SK-N-SH (cell line): ENCODE measurements at regions of chr19 and their contacts with region 1.

Region 1: DNA sequence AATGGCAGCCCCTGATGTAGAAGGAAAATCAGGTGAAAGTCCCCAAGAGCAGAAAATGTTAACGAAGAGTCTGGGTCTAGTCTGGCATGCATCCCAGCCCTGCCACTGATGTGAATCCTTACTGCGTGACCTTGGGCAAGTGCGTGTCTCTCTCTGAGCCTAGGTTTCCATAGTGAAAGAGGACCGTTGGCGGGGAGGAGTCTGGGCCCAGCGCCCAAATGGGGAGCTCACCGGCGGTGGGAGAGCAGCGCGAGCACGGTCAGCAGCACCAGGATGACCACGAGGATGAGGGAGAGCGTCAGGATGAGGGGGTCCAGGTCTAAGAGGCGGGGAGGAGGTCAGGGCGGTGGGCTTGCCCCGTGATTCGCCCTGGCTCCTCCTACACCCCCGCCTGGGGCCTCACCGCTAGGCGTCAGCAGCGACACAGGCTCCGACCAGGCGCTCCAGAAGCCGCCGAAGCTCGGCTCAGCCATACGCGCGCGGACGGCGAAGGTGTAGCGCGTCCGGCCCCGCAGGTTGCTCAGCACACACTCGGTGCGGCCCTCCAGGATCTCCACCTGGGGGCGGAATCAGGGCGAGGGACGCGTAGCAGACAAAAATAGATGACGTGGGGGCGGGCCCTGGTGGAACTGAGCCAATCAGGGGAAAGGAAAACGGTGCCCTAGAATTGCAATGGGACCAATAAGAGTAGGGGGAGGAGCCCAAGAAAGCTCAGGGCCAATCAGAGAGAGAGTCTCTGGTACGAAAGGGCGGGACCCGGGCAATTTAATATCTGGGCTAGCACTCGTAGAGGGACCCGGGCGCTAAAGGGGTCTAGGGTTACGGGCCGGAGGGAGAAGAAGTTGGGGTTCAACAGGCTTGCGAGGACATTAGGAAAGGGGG is 3.2 kb downstream of the EPOR start:
- DNase-seq: peak; percentile 95
- H3K4me3 ChIP-seq: peak overlapping the region; percentile 61 to 70
- H3K27ac ChIP-seq: peak overlapping the region; percentile 51 to 73
- H3K4me1 ChIP-seq: peaks cover 16 to 19% of the 10 kb centered on the region in 2 experiments; a peak in 3 of 4 replicates
- H3K27me3 ChIP-seq: no peaks in the 10 kb centered on the region
- CTCF ChIP-seq: peak; percentile 72
- EP300 ChIP-seq: no peak
- RAD21 ChIP-seq: peak; percentile 42

Region 2: DNA sequence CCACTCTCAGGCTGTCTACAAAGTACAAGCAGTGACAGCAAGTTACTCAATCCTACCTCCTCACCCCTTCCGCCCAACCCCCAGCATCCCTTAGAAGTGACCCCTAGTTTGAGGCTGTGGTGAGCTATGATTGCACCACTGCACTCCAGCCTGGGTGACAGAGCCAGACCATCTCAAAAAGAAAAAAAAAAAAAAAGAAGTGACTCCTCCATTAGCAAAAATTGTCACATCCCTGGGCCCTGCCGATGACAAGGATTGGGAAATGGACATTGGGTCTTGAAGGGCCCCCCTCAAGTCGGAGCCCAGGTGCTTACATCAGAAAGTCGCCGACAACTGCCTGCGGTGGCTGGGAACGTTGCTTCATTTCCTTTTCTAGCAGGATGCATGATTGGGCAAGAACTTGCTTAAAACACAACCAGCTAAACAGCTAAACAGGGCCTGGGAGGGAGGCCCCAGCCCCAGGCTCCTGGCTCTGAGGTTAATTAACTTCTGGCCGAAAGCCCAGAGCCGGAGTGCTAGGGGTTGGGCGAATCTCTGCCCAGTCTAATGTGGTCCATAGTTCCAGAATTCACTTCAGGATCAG is 56.7 kb before region 1 on chr19:
- CTCF ChIA-PET with region 1: interaction called, 11 read pairs
- POLR2A ChIA-PET with region 1: interaction called, 3 read pairs
- DNase-seq: peak; percentile 91
- H3K4me3 ChIP-seq: 0 out of 4 replicates have a peak overlapping the region, but pooled peaks of 1 of the 2 experiments have one; percentile 1
- H3K27ac ChIP-seq: peak overlapping the region; percentile 65 to 87
- H3K4me1 ChIP-seq: peaks cover 9 to 19% of the 10 kb centered on the region in 2 experiments
- H3K27me3 ChIP-seq: no peaks in the 10 kb centered on the region
- CTCF ChIP-seq: no peak
- EP300 ChIP-seq: peak; percentile 31 to 54; a peak in 3 of 4 replicates
- RAD21 ChIP-seq: peak; percentile 37

Region 3: DNA sequence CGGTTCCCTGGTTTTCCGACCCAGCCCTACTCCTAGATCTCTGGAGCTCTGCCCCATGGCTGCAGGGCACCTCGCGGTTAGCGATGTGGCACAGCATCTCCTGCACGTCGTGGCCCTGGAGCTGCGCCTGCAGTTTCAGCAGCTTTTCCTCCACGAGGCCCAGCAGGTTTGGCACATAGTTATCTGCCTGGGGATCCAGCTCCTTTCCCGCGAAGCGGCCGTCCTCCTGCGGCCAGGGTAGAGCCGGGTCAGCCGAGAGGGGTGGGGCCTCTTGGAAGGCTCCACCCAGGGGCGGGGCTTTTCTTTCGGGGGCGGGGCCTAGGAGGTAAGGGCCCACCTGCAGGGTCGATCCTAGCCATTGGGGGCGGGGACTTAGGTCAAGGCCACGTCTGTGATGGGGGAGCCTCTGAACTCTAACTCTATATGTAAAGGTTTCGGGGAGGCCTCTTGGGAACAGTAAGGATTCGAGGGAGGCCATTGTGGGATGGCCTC is 40.8 kb after region 1 on chr19:
- CTCF ChIA-PET with region 1: interaction called, 85 read pairs
- POLR2A ChIA-PET with region 1: interaction called, 30 read pairs
- DNase-seq: peak; percentile 77
- H3K4me3 ChIP-seq: no peak overlapping the region
- H3K27ac ChIP-seq: no peak overlapping the region
- H3K4me1 ChIP-seq: no peaks in the 10 kb centered on the region; a peak in 1 of 4 replicates
- H3K27me3 ChIP-seq: no peaks in the 10 kb centered on the region
- CTCF ChIP-seq: no peak
- EP300 ChIP-seq: no peak
- RAD21 ChIP-seq: no peak

Region 4: DNA sequence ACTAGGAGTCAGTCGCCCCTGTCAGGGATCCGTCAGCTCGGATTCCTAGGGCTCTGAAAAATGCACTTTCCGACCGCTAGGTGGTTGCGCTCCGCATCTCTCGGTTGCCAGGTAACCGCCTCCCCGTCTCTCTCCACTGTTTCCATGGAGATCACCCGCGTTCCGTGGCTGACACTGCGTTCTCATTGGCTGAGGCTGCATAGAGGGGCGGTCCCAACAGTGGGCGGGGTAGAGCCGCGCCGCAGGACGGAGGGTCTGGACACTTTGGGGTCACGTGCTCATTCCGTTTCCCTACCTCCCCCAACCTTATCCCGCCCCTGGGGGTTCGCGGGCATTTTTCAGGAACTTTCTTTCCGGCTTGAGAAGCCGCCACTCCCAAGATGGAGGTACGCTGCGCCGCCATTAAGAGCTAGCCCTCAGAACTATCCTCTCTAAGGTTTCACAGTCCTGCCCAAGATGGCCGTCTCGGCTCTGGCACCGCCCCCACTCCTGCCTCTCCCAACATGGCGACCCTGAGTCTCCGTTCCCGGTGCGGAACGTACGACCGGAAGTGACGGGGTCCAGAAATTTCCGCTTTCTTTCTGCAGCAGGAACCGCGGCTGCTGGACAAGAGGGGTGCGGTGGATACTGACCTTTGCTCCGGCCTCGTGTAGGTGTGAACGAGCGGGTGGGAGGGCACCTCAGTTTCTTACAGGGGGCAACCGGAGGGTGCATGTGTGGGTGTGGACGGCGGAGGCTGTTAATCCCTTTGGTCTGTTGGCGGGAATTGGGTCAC is 54.4 kb after region 1 on chr19 and contains the starts of genes ODAD3 and PRKCSH:
- CTCF ChIA-PET with region 1: interaction called, 54 read pairs
- POLR2A ChIA-PET with region 1: interaction called, 14 read pairs
- DNase-seq: peak; percentile 96
- H3K4me3 ChIP-seq: peak within 1 kb of the TSS; percentile 69 to 83
- H3K27ac ChIP-seq: peak within 1 kb of the TSS; percentile 73
- H3K4me1 ChIP-seq: peaks cover 5 to 12% of the 10 kb centered on the region in 2 experiments; a peak in 1 of 4 replicates
- H3K27me3 ChIP-seq: no peaks in the 10 kb centered on the region
- CTCF ChIP-seq: peak; percentile 77
- EP300 ChIP-seq: no peak
- RAD21 ChIP-seq: peak; percentile 38; the same call in 1 of the 2 replicates
- polyA plus RNA-seq, gene ODAD3: 3.2 and 4.2 TPM in 2 replicates
- polyA plus RNA-seq, gene PRKCSH: 198 and 502 TPM in 2 replicates

Region 5: DNA sequence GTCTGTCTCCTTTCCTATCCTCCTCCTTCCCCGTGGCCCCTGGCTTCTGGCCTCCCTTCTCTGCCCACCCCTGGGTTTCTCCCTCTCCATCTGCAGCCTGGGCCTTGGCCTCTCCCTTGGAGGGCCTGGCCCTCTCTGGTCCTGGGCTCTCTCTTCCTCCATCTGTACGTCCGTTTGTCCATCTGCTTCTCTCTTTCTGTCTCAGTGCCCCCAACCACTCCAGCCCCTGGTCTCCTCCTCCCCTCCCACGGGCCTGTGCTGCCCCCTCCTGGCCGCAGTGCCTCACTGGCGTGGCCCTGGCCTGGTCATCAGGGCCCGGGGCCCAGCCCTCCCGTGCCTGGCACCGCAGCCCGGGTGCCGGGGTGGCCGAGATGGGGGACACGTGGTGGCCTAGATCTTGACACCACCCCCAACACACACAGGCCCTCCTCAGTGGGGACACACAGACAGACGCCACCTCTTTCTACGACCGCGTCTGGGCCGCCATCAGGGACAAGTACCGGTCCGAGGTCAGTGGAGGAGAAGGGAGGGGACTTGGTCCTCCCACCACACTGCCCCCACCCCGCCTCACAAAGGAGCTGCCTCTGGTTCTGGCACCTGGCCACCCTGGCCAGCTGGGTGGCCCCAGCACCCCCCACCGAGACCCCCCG is 65.9 kb after region 1 on chr19:
- CTCF ChIA-PET with region 1: interaction called, 53 read pairs
- POLR2A ChIA-PET with region 1: interaction called, 8 read pairs
- DNase-seq: peak; percentile 97
- H3K4me3 ChIP-seq: no peak overlapping the region; a peak in 1 of 4 replicates
- H3K27ac ChIP-seq: no peak overlapping the region
- H3K4me1 ChIP-seq: no peaks in the 10 kb centered on the region
- H3K27me3 ChIP-seq: no peaks in the 10 kb centered on the region
- CTCF ChIP-seq: peak; percentile 85
- EP300 ChIP-seq: no peak
- RAD21 ChIP-seq: peak; percentile 81

Region 6: GRCh38 chr19:11473725-11474124 is 92.8 kb after region 1 on chr19:
- CTCF ChIA-PET with region 1: interaction called, 12 read pairs
- POLR2A ChIA-PET with region 1: no interaction called
- DNase-seq: peak; percentile 70
- H3K4me3 ChIP-seq: no peak overlapping the region
- H3K27ac ChIP-seq: no peak overlapping the region
- H3K4me1 ChIP-seq: peaks cover 0 to 7% of the 10 kb centered on the region in 2 experiments; a peak in 1 of 4 replicates
- H3K27me3 ChIP-seq: no peaks in the 10 kb centered on the region
- CTCF ChIP-seq: no peak
- EP300 ChIP-seq: no peak
- RAD21 ChIP-seq: no peak